ENCODE measurements at regions of chr3 and their contacts with region 1.

Region 1: DNA sequence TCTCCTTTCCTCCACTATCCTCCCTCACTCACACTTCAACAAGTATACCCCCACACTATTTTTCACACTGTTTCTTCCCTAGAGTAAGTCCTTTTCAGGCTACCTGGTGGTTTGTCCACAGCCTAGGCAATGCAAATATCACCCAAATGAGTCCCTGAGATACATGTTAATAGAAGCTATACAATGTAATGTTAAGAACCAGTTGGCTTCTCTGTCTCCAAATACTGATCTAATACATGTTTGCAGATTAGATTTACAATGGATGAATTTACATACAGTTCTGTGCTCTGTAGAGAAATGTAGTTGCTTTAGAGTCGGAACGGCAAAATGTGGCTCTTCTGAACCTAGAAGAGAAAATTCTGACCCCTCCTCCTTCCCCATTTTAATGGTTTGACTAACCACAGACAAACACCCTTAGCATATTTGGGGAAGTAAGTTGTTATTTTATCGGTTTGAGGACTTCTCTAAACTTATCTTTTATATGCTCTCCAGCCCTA is 63.6 kb upstream of the MBNL1 start:
- DNase-seq: no peak
- H3K4me3 ChIP-seq: no peak overlapping the region
- H3K27ac ChIP-seq: peak overlapping the region; percentile 59
- H3K4me1 ChIP-seq: peaks cover 4% of the 10 kb centered on the region
- H3K27me3 ChIP-seq: no peaks in the 10 kb centered on the region
- CTCF ChIP-seq: no peak

Region 2: DNA sequence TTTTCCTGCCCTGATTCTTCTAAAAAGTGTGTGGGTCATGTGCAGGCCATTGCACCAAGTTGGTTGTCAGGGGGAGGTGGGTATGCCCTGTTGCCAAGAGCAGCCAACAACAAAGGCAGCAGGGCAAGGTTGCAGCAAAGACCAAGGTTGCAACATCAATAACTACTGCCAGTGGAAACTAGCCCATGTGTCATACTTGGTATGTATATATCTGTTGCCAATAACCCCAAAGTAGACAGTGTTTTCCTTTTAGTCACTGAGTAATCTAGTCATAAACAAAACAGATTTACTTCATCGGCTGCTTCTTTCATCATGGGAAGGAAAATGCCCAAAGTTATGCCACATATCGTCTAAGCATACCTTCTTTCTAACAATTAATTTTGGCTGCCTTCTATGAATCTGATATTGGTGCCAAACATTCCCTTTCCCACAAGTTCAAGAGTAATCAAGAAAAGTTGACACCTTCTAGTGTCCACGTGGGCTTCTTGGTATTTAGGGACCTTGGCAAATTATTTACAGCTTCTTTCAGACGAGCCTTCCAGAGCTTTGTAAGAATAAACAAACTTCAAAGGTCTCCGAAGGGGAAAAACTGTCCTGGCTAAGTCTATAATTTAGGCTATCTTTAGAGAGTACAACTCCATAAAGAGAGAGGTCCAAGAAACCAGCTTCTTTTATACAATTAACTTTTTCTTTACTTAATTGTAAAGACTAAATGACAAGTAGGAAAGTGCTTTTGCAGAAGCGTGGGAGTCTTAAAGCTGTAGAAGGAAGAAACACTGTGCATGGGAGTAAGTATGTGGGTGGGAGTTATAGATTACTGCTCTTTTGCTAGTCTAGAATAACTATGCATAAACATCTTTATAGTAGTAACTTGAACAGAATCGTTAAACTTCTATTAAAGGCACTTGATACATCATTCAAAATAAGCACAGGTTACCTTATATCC is 53.6 kb after region 1 on chr3:
- intact Hi-C with region 1: loop called (anchors 5 kb)
- DNase-seq: no peak
- H3K4me3 ChIP-seq: no peak overlapping the region
- H3K27ac ChIP-seq: peak overlapping the region; percentile 19
- H3K4me1 ChIP-seq: peaks cover 7% of the 10 kb centered on the region
- H3K27me3 ChIP-seq: no peaks in the 10 kb centered on the region
- CTCF ChIP-seq: no peak

Region 3: GRCh38 chr3:152436707-152437590 is 231.8 kb after region 1 on chr3:
- intact Hi-C with region 1: no loop called
- DNase-seq: no peak
- H3K4me3 ChIP-seq: no peak overlapping the region
- H3K27ac ChIP-seq: no peak overlapping the region
- H3K4me1 ChIP-seq: no peaks in the 10 kb centered on the region
- H3K27me3 ChIP-seq: no peaks in the 10 kb centered on the region
- CTCF ChIP-seq: no peak

Region 4: GRCh38 chr3:152695840-152696239 is 490.7 kb after region 1 on chr3:
- intact Hi-C with region 1: no loop called
- DNase-seq: no peak
- H3K4me3 ChIP-seq: no peak overlapping the region
- H3K27ac ChIP-seq: no peak overlapping the region
- H3K4me1 ChIP-seq: no peaks in the 10 kb centered on the region
- H3K27me3 ChIP-seq: no peaks in the 10 kb centered on the region
- CTCF ChIP-seq: no peak